Posterior cingulate gyrus (tissue), 11 donors: ENCODE measurements at regions of chr4 and their contacts with region 1.

Region 1: DNA sequence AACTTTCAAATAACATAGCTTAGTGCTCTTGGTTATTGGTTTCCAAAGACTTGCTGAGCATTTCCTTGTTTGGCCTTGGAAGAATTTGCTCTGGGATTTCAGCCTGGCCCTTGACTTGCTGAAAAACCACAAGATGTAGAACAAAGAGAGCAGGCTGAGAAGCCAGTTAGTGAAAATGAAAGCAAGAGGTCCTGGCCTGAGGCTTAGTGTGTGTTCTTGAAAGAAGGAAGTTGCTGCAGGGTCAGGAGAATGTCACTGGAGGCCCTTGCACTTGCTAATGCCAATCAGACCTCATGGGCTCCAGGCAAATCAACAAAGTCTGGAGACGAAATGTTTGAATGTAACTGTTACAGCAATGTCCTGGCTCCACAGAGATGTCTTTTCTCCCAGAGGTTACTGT is 79.4 kb downstream of the SYNPO2 start:
- DNase-seq: peak in 1 of 10 donors; percentile 8

Region 2: GRCh38 chr4:118740869-118741268 is 227.1 kb before region 1 on chr4:
- intact Hi-C with region 1: loop called (anchors 10 kb)
- DNase-seq: no peak

Region 3: DNA sequence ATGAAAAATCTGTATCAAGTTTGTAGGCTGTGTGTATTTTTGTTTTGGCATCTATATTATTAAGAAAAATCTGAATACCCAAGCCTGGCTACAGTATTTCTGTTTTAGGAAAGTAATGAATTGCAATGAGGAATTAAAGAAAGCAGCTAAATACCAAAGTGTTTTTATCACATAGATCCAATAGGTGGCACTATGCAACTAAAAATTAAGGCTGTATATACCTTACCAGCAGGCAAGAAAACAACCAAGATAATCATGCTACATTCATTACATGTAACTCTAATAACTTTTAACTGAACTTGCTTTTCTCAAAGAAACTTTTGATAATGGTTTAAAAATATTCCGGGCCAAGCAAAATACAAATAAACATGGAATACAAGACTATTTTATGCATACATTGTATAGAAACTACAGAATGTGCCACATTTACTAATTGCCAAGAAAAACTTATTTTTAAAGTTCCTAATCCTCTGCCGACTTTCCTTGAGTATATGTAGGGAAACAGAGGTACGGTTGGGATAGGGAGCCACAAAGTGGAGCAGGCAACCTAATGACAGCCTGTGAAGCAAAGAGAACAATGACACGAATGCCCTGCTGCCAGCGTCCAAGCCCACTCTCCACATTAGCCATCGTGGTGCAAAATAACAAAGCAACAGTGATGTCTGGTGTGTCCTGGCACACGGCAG is 195.8 kb before region 1 on chr4:
- intact Hi-C with region 1: loop called (anchors 2 kb)
- DNase-seq: no peak

Region 4: DNA sequence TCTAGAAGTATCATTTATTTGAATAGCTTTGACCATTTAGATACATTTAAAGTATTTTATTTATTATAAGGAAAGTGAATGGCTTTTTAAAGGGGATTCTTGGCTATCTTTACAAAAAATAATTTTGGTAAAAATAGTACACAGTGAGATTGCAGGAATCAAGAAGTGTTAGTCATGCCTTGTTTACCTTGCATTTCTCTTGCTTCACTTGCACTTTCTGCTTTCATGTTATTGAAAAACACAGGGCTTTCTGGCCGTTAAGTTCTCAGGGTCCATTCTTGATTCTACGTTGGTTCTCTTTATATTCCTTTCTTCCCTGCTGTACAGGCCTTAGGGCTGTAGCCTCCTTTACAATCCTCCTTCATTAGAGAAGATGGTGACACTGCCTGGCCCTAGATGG is 110.2 kb before region 1 on chr4:
- intact Hi-C with region 1: no loop called
- DNase-seq: no peak

Region 5: GRCh38 chr4:118898684-118899138 is 69.3 kb before region 1 on chr4:
- intact Hi-C with region 1: loop called (anchors 10 kb)
- DNase-seq: peak in 1 of 10 donors; percentile 55